ENCODE measurements at regions of chr5 and their contacts with region 1.

Region 1: DNA sequence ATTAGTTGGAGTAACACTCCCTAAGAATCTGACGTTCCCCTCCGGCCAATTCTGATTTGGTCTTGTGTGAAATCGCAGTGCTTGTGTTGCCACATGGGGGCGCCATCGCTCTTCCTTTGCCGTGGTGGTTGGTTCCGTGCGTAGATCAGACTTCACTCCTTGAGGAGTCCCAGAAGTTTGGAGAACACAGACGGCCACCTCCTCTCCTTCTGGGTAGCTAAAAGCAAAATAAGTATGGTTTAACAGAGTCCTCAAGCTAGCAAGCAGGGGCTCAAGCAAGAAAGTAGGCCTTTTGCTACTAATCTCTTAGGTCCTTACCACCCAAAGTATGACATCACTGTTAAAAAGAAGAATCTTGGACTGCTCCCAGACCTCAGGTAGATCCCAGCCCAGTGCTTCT is 59.5 kb downstream of the HSPA4 start:
- DNase-seq: peak; percentile 17
- H3K4me3 ChIP-seq: no peak overlapping the region
- CTCF ChIP-seq: peak; percentile 91

Region 2: DNA sequence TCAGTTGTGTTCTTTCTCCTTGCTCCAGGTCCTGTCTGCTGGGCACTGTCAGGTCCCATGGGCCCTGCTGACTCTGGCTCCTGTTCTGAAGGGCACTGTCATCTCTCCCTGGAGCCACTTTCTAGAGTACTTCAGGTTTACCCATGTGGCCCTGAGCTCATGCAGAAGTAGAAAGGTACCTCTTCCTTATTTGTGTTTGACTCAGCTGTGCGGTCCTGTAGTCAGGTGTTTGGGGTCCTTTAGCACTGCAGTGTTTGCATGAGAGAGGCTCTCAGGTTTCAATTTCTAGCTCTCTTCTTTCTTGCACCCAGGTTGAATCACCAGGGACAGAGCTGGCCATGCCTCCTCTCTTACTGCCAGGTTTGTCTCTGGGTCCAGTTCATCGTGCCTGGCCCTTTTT is 12.0 kb after region 1 on chr5:
- CTCF ChIA-PET with region 1: interaction called, 14 read pairs
- POLR2A ChIA-PET with region 1: no interaction called
- DNase-seq: no peak
- H3K4me3 ChIP-seq: no peak overlapping the region
- CTCF ChIP-seq: no peak

Region 3: GRCh38 chr5:133159543-133159942 is 48.2 kb after region 1 on chr5:
- CTCF ChIA-PET with region 1: no interaction called
- POLR2A ChIA-PET with region 1: no interaction called
- DNase-seq: no peak
- H3K4me3 ChIP-seq: no peak overlapping the region
- CTCF ChIP-seq: no peak

Region 4: DNA sequence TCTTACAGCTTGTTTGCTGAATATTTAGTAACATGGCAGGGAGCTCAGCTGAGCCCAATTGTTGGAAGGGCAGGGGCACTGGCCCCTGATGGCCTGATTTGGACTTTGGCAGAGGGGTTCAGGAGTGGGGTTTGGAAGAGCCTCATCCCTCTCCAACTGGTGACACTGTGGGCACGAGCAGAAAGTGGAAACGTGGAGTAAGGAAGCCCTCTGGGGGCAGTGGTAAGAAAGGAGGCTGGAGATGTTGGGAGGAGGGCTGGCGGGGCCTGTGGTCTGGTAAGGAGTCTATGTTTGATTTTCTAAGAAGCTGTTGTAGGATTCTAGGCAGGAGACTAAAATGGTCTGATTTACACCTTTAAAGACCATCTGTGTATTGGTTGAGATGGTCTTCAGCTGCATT is 149.4 kb after region 1 on chr5:
- CTCF ChIA-PET with region 1: interaction called, 13 read pairs
- POLR2A ChIA-PET with region 1: no interaction called
- DNase-seq: no peak
- H3K4me3 ChIP-seq: no peak overlapping the region
- CTCF ChIP-seq: no peak

Region 5: GRCh38 chr5:133273661-133274596 is 162.6 kb after region 1 on chr5:
- CTCF ChIA-PET with region 1: interaction called, 11 read pairs
- POLR2A ChIA-PET with region 1: no interaction called
- DNase-seq: no peak
- H3K4me3 ChIP-seq: no peak overlapping the region
- CTCF ChIP-seq: no peak

Region 6: GRCh38 chr5:133287500-133287899 is 176.2 kb after region 1 on chr5:
- CTCF ChIA-PET with region 1: interaction called, 164 read pairs
- POLR2A ChIA-PET with region 1: no interaction called
- DNase-seq: no peak
- H3K4me3 ChIP-seq: no peak overlapping the region
- CTCF ChIP-seq: peak; percentile 78

Region 7: DNA sequence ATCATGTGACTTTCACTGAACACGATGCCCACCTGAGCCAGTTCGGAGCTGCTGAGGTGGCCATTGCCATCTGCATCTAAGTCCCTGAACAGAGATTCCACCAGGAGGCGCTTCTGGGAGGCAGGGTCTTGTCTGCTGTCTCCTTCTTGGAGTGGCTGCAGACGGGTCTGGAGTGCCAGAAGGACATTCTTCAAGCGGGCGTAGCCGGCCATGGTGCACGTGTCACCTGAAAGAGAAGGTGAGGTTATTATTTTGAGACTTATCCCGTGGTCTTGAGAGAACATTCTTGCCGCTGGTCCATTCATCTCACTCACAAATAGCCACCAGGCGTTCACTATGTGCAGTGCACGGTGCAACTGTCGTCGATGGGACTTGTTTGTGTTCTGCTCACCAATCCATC is 205.1 kb after region 1 on chr5:
- CTCF ChIA-PET with region 1: interaction called, 10 read pairs
- POLR2A ChIA-PET with region 1: no interaction called
- DNase-seq: no peak
- H3K4me3 ChIP-seq: no peak overlapping the region
- CTCF ChIP-seq: no peak

Region 8: DNA sequence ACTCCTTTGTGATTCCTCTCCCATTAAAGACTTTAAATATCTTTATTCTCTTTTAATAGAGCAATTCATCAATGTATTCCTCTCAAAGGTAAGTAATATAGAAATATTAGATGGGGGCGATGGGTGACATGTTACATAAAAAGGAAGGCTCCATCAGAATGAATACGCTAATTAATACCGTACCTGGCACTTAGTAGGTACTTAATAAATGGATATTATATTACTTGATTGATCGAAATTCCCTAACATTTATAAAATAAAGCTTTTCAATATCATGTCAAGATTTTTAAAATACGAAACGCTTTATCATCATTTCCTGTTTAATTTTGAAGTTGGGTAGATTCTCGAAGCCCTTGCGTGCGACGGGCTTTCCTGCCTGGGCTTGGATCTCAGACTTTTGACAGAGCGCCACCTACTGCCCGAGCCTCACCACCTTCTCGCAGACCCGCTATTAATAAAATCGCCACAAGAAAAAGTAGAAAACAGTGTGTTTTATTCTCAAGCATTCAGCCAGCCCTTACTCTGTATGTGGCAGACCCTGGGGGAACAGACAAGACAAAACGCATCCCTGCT is 757.7 kb after region 1 on chr5:
- CTCF ChIA-PET with region 1: interaction called, 10 read pairs
- POLR2A ChIA-PET with region 1: no interaction called
- DNase-seq: no peak
- H3K4me3 ChIP-seq: no peak overlapping the region
- CTCF ChIP-seq: peak; percentile 79

Measured in AG04449 (cell line).